ENCODE measurements at regions of chr14 and their contacts with region 1.

Region 1: DNA sequence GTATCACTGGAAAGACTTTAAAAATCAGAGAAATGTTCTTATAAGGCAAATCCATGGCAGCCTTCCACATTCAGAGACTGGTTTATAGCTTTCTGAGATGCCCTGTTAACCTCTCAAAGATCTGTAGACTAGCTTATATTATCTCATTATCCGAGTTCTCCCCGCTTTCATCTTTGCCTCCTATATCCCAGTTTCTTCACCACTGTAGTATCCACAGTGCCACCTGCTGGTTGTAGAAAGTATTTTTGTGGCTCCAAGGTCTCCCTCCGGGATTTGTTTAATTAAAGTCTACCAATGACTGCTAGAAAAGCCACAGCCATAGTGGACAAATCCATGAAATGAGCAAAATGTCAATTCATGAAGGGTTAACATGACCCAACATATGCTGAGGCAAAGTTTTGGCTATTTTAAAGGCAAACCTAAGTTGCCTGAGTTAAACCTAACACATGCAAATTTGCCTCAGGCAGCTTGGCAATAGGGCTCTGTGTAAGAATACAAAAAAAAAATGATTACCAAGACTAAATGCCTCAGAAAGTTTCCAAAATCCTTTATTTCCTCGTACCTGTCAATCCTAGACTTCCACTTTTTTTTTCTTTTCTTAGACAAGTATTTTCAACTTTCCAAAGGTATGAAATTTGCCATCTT is 218.8 kb upstream of the BMP4 start:
- DNase-seq: peak; percentile 88
- H3K4me3 ChIP-seq: no peak overlapping the region
- H3K27ac ChIP-seq: no peak overlapping the region
- H3K4me1 ChIP-seq: no peaks in the 10 kb centered on the region
- H3K27me3 ChIP-seq: peaks cover 39% of the 10 kb centered on the region
- CTCF ChIP-seq: peak; percentile 83

Region 2: GRCh38 chr14:53412803-53413675 is 762.4 kb before region 1 on chr14:
- CTCF ChIA-PET with region 1: no interaction called
- POLR2A ChIA-PET with region 1: no interaction called
- intact Hi-C with region 1: loop called (anchors 10 kb)
- DNase-seq: peak; percentile 25
- H3K4me3 ChIP-seq: no peak overlapping the region
- H3K27ac ChIP-seq: no peak overlapping the region
- H3K4me1 ChIP-seq: no peaks in the 10 kb centered on the region
- H3K27me3 ChIP-seq: no peaks in the 10 kb centered on the region
- CTCF ChIP-seq: peak; percentile 68

Region 3: GRCh38 chr14:53539489-53540126 is 635.8 kb before region 1 on chr14:
- CTCF ChIA-PET with region 1: no interaction called
- POLR2A ChIA-PET with region 1: no interaction called
- intact Hi-C with region 1: loop called (anchors 2 kb)
- DNase-seq: peak; percentile 78
- H3K4me3 ChIP-seq: no peak overlapping the region
- H3K27ac ChIP-seq: no peak overlapping the region
- H3K4me1 ChIP-seq: peaks cover 8% of the 10 kb centered on the region
- H3K27me3 ChIP-seq: no peaks in the 10 kb centered on the region
- CTCF ChIP-seq: peak; percentile 93

Region 4: GRCh38 chr14:53953002-53953827 is 222.2 kb before region 1 on chr14:
- CTCF ChIA-PET with region 1: no interaction called
- POLR2A ChIA-PET with region 1: no interaction called
- intact Hi-C with region 1: loop called (anchors 5 kb)
- DNase-seq: peak; percentile 67
- H3K4me3 ChIP-seq: peak overlapping the region; percentile 44
- H3K27ac ChIP-seq: no peak overlapping the region
- H3K4me1 ChIP-seq: peaks cover 9% of the 10 kb centered on the region
- H3K27me3 ChIP-seq: peaks cover 100% of the 10 kb centered on the region
- CTCF ChIP-seq: no peak

Region 5: DNA sequence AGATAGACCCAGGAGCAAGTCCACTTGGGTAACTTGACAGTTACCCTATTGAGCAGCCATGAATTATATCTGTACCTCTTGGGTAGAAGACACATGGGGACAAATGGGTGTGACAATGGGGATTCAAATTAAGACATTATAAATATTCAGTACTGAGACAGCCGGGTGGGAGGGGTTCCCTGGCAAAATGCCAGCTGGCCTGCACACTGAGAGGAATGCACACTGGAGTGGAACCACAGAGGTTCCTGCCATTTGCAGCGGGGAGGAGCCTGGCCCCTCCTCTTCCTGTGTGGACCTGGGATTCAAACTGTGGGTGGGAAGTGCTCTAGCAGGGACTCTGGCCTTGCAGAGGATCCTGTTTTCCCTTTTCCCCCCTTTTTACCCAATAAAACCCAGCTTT is 102.7 kb after region 1 on chr14:
- CTCF ChIA-PET with region 1: no interaction called
- POLR2A ChIA-PET with region 1: no interaction called
- intact Hi-C with region 1: no loop called
- DNase-seq: peak; percentile 45
- H3K4me3 ChIP-seq: no peak overlapping the region
- H3K27ac ChIP-seq: no peak overlapping the region
- H3K4me1 ChIP-seq: no peaks in the 10 kb centered on the region
- H3K27me3 ChIP-seq: no peaks in the 10 kb centered on the region
- CTCF ChIP-seq: no peak

Region 6: DNA sequence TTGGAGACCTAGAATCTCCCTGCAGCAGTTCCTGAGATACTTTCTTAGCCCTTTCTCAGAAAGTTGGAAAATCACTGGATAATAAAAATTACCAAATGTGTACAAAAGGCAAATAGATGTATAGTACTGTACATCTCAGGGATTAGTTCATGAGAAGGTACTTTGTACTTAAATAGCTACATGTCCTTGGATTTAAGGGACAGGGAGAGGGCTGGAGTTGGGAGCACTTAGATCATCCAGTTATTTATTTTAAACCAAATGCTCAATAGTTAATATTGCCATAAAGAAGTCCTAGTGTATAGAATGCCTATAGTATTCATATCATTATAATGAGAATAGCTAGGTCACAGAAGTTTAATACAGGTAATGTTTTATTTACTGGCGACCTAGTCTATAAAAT is 234.8 kb after region 1 on chr14:
- CTCF ChIA-PET with region 1: no interaction called
- POLR2A ChIA-PET with region 1: interaction called, 17 read pairs
- intact Hi-C with region 1: no loop called
- DNase-seq: no peak
- H3K4me3 ChIP-seq: no peak overlapping the region
- H3K27ac ChIP-seq: no peak overlapping the region
- H3K4me1 ChIP-seq: no peaks in the 10 kb centered on the region
- H3K27me3 ChIP-seq: no peaks in the 10 kb centered on the region
- CTCF ChIP-seq: no peak

Measured in A673 (cell line).